MCF 10A (cell line): ENCODE measurements at regions of chr11 and their contacts with region 1.

Region 1: DNA sequence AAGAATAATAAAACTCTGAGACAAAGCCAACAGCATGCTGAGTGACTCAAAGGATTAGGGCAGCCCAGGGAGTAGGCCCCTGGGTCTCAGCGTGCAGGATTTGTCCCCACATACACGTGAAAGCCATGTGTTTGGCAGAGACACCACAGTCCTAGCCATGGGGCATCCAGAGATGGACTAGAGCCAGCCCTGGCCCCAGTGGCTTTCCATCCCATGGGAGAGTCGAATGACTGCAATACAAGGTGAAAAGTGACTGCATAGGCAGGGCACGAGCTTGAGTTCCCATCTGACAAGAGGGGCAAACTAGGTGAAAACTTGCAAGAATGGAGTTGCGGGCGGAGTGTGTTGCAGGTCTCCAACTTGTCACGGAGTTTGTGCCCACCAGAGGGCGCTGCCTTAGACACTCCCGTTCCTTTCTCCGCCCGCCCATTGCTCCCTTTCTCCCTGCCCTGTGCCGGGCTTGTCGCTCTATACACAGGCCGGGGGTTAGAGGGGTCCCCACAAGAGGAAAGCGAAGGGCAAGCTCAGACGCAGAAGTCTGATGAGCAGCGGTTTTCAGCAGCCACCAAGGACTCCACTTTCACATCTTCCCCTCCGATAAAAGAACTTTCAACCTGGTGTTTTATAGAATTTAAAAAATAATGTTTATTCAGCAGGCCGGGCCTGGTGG is 24.2 kb downstream of the TSKU start:
- DNase-seq: peak; percentile 87
- H3K4me3 Mint-ChIP-seq: no peak overlapping the region
- H3K27ac Mint-ChIP-seq: no peak overlapping the region
- H3K4me1 Mint-ChIP-seq: peaks cover 37% of the 10 kb centered on the region
- H3K27me3 Mint-ChIP-seq: no peaks in the 10 kb centered on the region
- CTCF ChIP-seq: peak; percentile 84

Region 2: DNA sequence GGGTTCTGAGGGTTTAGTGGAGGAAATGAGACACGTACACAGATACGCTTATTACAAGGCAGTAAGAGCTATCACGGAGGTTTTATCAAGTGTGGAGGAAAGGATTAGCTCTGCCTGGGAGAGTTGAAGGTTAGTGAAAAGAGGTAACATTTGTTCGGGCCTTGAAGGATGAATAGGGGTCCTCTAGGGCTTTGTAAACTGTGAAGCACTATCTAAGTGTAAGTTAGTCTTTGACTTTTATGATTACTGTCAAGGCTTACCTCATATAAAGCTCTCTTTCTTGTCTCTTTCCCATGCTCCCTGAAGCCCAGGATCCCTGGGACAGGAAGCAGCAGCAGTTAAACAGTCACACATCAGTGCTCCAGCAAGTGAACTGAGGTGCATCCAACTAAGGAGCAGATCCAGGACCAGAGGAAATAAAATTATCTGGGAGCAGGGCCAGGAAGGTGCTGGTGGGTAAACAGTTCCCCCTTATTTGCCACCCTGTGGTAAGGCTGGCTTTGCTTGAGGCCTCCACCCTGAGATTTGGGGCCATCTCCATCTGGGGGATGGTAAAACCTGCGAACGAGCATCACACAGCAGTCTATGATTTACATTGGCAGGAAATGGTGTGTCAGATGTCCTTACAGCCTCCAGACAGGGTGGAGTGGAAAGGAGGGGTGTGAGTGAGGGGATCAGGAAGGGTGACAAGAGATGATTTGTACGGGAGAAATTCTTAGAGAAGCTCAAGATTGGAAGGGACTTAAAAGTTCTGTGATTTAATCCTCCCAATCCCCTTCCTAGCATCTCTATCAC is 399.0 kb before region 1 on chr11:
- CTCF ChIA-PET with region 1: no interaction called
- POLR2A ChIA-PET with region 1: no interaction called
- intact Hi-C with region 1: no loop called
- DNase-seq: no peak
- H3K4me3 Mint-ChIP-seq: no peak overlapping the region
- H3K27ac Mint-ChIP-seq: no peak overlapping the region
- H3K4me1 Mint-ChIP-seq: no peaks in the 10 kb centered on the region
- H3K27me3 Mint-ChIP-seq: peaks cover 19% of the 10 kb centered on the region
- CTCF ChIP-seq: no peak

Region 3: GRCh38 chr11:76823481-76824078 is 16.2 kb after region 1 on chr11:
- CTCF ChIA-PET with region 1: interaction called, 24 read pairs
- POLR2A ChIA-PET with region 1: interaction called, 4 read pairs
- intact Hi-C with region 1: no loop called
- DNase-seq: peak; percentile 97
- H3K4me3 Mint-ChIP-seq: peak overlapping the region; percentile 51
- H3K27ac Mint-ChIP-seq: peak overlapping the region; percentile 67
- H3K4me1 Mint-ChIP-seq: peaks cover 27% of the 10 kb centered on the region
- H3K27me3 Mint-ChIP-seq: no peaks in the 10 kb centered on the region
- CTCF ChIP-seq: no peak

Region 4: GRCh38 chr11:76860539-76861475 is 53.5 kb after region 1 on chr11 and contains the start of gene ACER3:
- CTCF ChIA-PET with region 1: interaction called, 4 read pairs
- POLR2A ChIA-PET with region 1: no interaction called
- intact Hi-C with region 1: loop called (anchors 1 kb)
- DNase-seq: peak; percentile 89
- H3K4me3 Mint-ChIP-seq: peak within 1 kb of the TSS; percentile 85
- H3K27ac Mint-ChIP-seq: peak within 1 kb of the TSS; percentile 84
- H3K4me1 Mint-ChIP-seq: peaks cover 24% of the 10 kb centered on the region
- H3K27me3 Mint-ChIP-seq: no peaks in the 10 kb centered on the region
- CTCF ChIP-seq: peak; percentile 22
- total RNA-seq, gene ACER3: 12.7 and 13.8 TPM in 2 replicates

Region 5: DNA sequence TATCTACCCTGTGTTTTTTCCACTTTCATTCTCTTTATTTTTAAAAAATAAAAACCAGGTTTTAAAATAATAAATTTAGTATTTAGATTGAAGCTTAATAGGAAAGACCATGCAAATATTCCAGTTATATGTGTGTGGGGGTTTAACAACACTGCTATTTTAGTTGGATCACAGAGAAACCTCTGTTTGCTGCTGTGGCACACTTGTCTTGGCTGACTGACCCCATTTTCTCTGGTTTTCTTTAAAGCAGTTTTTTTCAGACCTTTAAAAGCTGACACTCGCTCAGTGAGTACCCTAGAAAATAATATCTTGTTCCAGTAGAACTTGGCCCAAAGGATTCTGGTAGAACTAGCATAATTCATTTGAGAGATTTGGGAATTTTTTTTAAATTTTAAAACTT is 85.0 kb after region 1 on chr11:
- CTCF ChIA-PET with region 1: no interaction called
- POLR2A ChIA-PET with region 1: no interaction called
- intact Hi-C with region 1: no loop called
- DNase-seq: no peak
- H3K4me3 Mint-ChIP-seq: no peak overlapping the region
- H3K27ac Mint-ChIP-seq: no peak overlapping the region
- H3K4me1 Mint-ChIP-seq: no peaks in the 10 kb centered on the region
- H3K27me3 Mint-ChIP-seq: no peaks in the 10 kb centered on the region
- CTCF ChIP-seq: no peak